ENCODE measurements at regions of chr1 and their contacts with region 1.

Region 1: DNA sequence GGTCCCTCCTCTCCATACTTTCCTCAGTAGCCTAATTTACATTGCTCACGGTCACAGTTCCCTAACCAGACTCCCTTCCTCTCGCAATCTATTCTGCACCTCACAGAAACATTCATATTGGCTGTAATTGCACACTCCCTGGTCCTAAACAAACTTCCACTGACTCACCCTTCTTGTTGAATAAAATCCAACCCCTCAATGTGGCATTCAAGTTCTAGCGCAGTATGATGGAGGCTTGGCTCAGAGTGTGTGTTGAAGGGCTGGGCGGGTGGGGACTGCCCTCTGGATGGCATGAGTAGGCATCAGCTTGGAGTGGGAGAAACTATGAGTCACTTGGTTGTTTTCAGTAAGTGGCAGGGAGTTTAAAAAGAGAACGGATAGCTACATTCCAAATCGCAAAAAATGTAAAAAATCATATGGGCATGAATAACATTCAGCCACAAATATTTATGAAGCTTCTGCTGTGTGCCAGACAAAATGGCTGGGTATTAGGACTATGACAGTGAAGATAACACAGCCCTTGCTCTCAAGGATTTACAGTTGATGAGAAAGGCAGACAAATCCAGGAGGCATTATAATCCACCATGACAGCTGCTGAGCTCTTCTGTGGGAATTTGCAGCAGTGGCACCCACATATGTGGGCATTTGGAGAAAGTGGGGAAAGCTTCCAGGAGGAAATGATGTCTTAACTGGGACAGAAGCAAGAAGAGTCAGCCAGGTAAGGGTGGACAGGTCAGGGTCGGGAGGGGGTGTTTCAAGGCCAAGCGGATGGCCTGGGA is 42.2 kb upstream of the LYST start:
- DNase-seq: no peak
- H3K4me3 ChIP-seq: peak overlapping the region in 1 of 4 donors; percentile 12
- H3K27ac ChIP-seq: peak overlapping the region; percentile 66 to 73 (median 69)
- H3K4me1 ChIP-seq: peaks cover 13 to 27% (median 22%) of the 10 kb centered on the region in 4 donors
- H3K27me3 ChIP-seq: no peaks in the 10 kb centered on the region
- CTCF ChIP-seq: no peak
- EP300 ChIP-seq: no peak
- POLR2A ChIP-seq: no peak

Region 2: DNA sequence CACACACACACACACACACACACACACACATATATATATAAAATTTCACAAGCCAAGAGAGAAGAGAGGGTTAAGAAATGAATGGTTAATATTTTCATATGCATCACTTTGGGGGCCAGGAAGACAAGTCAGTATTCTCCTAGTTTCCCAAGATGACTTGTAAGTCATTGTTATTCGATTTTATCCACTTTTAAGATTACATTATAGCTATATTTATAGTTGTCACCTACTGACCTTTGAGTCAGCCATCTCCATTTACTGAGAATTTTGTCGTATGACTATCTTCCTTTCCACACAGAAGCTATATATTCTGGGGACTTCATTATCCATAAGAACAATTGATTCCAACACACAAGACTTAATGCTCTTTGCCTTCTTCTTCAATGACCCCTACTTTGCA is 51.2 kb before region 1 on chr1:
- intact Hi-C with region 1: no loop called
- DNase-seq: no peak
- H3K4me3 ChIP-seq: no peak overlapping the region
- H3K27ac ChIP-seq: no peak overlapping the region
- H3K4me1 ChIP-seq: peaks cover 0 to 43% (median 40%) of the 10 kb centered on the region in 4 donors
- H3K27me3 ChIP-seq: no peaks in the 10 kb centered on the region
- CTCF ChIP-seq: no peak
- EP300 ChIP-seq: no peak
- POLR2A ChIP-seq: no peak

Region 3: DNA sequence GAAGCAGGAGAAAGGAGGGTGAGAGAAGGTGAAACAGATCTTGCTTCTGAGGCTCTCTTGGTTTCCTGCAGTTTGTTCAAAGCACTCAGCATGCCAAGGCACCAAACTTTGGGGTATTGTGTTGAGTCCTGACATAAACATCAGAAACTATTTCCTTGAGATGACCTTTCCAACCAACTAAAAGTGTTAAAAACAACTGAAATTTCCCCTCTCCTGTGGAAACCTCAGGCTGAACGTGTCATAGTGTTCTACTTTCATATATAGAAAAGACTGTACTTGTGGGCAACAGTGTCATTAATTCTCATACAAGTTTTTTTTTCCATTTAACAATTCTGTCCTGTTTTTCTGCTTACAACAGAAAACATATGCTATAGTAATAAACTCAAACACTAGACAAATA is 35.9 kb before region 1 on chr1:
- intact Hi-C with region 1: loop called (anchors 5 kb)
- DNase-seq: no peak
- H3K4me3 ChIP-seq: no peak overlapping the region
- H3K27ac ChIP-seq: no peak overlapping the region
- H3K4me1 ChIP-seq: peaks cover 0 to 4% (median 2%) of the 10 kb centered on the region in 4 donors
- H3K27me3 ChIP-seq: no peaks in the 10 kb centered on the region
- CTCF ChIP-seq: no peak
- EP300 ChIP-seq: no peak
- POLR2A ChIP-seq: no peak

Measured in esophagus muscularis mucosa (tissue), 4 donors.